Posterior vena cava (tissue), 2 donors: ENCODE measurements at regions of chr1 and their contacts with region 1.

Region 1: DNA sequence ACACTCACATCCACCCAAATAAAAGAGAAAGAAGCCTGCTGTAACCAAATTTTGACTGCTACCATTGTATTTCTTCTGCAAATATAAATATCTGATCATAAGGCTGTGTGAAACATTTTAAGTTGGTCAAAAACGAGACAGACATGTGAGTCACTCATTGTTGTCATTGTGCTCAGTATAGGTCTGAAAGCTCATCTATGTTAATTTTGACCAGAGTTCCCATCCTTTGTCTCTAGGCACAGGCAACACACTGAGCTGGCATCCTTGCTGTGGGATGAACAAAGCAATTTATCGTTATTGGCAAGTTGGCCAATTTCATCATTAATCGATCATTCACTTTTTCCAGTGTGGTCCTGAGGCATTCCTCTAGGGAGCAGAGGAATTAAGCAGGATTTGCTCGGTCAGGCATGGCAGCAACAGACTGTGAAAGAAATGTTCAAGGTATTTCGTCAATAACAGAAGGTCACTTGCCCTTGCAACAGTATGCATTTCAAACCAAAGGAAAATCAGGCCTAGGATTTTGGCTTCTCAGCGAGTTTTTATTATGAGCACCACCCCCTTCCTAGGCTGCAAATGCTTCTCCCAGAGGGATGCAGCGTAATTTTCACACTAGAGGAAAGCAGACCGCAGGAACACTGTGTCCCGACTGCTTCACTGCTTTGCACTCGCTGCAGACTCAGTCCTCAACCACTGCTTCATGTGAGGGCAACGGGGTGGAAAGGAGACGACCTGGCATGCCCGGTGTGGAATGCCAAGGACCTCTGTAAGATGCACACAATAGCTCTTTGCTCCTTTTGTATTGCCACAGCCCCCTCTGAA is 87.9 kb upstream of the SMYD2 start:
- DNase-seq: no peak

Region 2: GRCh38 chr1:214247501-214248041 is 54.5 kb after region 1 on chr1:
- intact Hi-C with region 1: loop called in 1 of 2 experiments (anchors 2 kb)
- DNase-seq: no peak

Region 3: GRCh38 chr1:214476958-214477870 is 284.2 kb after region 1 on chr1:
- intact Hi-C with region 1: no loop called
- DNase-seq: no peak